ENCODE measurements at regions of chr12 and their contacts with region 1.

Region 1: DNA sequence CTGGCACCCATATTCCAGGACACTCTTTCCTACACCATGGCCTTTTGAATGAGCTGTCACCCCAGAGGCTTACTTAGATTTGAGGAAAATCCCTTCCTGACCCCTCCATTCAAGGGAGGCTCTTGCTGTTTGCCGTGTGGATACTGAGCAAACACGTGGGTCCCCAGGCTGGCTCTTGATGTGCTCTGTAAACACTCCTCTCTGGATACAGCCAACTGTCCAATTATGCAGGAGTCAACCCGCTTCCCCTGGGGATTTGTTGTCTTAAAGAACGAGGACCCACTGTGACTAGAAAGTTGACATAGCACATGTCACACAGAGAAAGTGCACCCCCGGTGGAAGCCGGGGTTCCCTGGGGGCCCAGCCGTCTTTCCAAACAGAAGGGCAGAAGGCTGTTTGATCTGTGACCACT is 75.8 kb upstream of the CEP83 start:
- DNase-seq: no peak
- H3K4me3 ChIP-seq: no peak overlapping the region
- H3K27ac ChIP-seq: no peak overlapping the region
- H3K4me1 ChIP-seq: no peaks in the 10 kb centered on the region
- H3K27me3 ChIP-seq: no peaks in the 10 kb centered on the region

Region 2: DNA sequence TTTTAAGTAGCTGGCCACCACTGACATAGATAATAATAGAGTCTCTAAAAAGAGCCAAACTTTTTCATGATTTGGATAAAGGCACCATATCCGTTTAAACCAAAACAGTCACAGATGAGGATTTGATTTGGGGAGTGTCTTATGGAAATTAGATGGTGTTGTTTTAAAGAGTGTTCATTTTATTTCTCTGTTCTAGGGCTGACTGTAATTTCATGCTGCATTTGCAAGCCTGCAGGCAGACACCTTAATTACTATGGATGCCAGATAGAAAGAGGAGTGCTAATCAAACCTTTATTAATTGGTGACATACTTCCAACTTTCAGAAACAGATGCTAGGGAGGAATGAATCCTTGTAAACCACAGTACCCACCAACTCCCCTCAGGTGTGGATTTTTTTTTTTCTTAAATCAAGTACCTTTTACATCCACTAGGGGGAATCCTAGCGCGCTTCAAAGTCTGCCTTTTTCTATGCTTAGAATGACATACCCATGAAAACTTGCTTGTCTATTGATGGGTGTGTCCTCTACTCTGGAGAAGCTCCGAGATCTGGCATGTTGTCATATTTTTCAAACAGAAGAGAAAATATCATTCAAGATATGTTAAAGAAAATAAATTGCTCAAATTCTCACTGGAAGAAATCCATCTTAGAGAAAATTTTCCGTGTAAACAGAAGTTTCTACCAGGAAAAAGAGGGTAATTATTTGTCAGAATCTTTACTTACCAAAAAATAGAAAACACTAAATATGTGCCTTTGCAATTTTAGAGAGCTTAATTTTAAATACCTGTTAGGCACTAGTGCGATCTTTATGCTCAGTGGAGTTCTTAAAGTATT is 401.3 kb before region 1 on chr12:
- CTCF ChIA-PET with region 1: interaction called, 14 read pairs
- POLR2A ChIA-PET with region 1: no interaction called
- DNase-seq: peak; percentile 69 to 81 (median 76)
- H3K4me3 ChIP-seq: no peak overlapping the region
- H3K27ac ChIP-seq: no peak overlapping the region
- H3K4me1 ChIP-seq: no peaks in the 10 kb centered on the region
- H3K27me3 ChIP-seq: no peaks in the 10 kb centered on the region

Region 3: DNA sequence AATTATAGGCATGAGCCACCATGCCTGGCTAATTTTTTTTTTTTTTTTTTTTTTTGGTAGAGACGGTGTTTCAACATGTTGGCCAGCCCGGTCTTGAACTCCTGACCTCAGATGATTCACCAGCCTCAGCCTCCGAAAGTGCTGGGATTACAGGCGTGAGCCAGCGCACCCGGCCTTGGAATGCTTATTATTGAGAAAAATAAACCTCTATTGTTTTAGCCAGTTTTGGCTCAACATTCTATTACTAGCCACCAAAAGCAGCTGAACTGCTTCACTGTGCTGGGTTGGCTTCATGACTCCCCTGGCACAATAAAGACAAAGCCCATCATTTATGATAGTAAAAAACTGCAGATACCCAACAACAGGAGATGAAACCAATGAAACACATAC is 17.6 kb after region 1 on chr12:
- CTCF ChIA-PET with region 1: no interaction called
- POLR2A ChIA-PET with region 1: no interaction called
- DNase-seq: no peak
- H3K4me3 ChIP-seq: no peak overlapping the region
- H3K27ac ChIP-seq: no peak overlapping the region
- H3K4me1 ChIP-seq: no peaks in the 10 kb centered on the region
- H3K27me3 ChIP-seq: no peaks in the 10 kb centered on the region